ENCODE measurements at regions of chr17 and their contacts with region 1.

Region 1: GRCh38 chr17:8745586-8746500 is 1.2 kb upstream of the CCDC42 start:
- DNase-seq: peak; percentile 56 to 91 (median 82)
- ATAC-seq: peak; percentile 72
- H3K4me3 ChIP-seq: peak overlapping the region; percentile 74 to 77
- H3K4me3 Mint-ChIP-seq: peak overlapping the region; percentile 94
- H3K27ac ChIP-seq: peak overlapping the region; percentile 69 to 82
- H3K27ac Mint-ChIP-seq: peak overlapping the region; percentile 94
- H3K4me1 ChIP-seq: peaks cover 15% of the 10 kb centered on the region
- H3K4me1 Mint-ChIP-seq: peaks cover 25% of the 10 kb centered on the region
- H3K27me3 ChIP-seq: no peaks in the 10 kb centered on the region
- H3K27me3 Mint-ChIP-seq: no peaks in the 10 kb centered on the region
- CTCF ChIP-seq: peak; percentile 94

Region 2: DNA sequence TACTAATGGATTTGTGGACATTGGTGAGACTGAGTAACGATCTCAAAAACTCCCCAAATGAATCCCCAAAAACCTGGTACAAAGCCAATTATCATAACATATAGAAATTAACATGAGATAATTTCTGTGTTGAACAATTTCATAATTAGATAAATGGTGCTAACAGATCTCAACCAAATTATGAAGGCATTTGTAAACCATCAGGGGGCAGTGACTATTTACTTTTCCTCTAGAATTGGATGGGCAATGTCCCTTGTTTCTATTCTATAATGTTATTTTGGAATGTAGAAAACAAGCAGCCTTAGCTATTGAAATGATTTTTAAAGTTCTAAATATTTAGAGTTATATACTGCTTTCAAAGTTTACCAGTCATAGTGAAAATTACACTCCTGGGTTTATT is 173.1 kb before region 1 on chr17:
- CTCF ChIA-PET with region 1: interaction called, 3 read pairs
- POLR2A ChIA-PET with region 1: no interaction called
- intact Hi-C with region 1: loop called (anchors 1 to 2 kb)
- DNase-seq: peak in 2 of 9 experiments; percentile 3 to 20
- ATAC-seq: no peak
- H3K4me3 ChIP-seq: no peak overlapping the region
- H3K4me3 Mint-ChIP-seq: no peak overlapping the region
- H3K27ac ChIP-seq: no peak overlapping the region
- H3K27ac Mint-ChIP-seq: no peak overlapping the region
- H3K4me1 ChIP-seq: no peaks in the 10 kb centered on the region
- H3K4me1 Mint-ChIP-seq: no peaks in the 10 kb centered on the region
- H3K27me3 ChIP-seq: no peaks in the 10 kb centered on the region
- H3K27me3 Mint-ChIP-seq: peaks cover 3% of the 10 kb centered on the region
- CTCF ChIP-seq: no peak

Region 3: DNA sequence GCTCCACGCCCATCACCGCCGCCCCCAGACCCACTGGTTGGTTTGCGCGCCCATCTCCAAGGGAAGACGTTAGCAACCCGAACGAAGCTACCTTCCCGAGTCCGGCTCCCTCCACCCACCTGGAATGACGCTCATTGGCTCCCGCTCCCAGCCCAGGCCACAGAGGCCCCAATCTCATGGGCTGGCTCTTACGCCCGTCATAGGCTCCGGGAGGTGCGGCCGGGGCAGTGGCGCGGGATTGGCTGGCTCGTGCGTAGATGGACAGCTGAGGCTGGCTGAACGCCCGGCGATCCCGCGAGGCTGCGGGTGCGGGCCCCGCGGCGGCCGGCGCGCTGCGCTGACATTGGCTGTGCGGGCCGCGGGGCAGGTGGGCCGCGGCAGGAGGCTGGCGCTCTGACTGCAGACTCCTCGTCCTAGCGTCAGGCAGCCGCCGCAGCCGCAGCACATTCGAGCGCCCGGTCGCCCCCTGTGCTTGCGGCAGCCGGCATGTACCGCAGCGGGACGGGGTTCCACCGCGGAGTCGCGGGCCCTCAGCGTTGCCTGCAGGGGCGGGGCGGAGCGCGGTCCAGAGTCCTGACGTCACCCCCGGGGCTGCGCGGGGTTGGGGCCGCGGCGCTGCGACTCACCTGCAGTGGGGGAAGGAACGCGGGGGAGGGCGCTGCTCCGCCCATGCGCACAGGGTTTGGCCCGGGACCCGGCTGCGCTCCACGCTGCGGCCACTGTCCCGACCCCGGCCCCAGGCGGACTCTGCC is 114.9 kb before region 1 on chr17:
- CTCF ChIA-PET with region 1: no interaction called
- POLR2A ChIA-PET with region 1: no interaction called
- intact Hi-C with region 1: loop called (anchors 2 to 5 kb)
- DNase-seq: peak; percentile 50 to 93 (median 81)
- ATAC-seq: peak; percentile 87
- H3K4me3 ChIP-seq: peak overlapping the region; percentile 71 to 89
- H3K4me3 Mint-ChIP-seq: peak overlapping the region; percentile 98
- H3K27ac ChIP-seq: peak overlapping the region in 1 of 2 experiments; percentile 26
- H3K27ac Mint-ChIP-seq: peak overlapping the region; percentile 72
- H3K4me1 ChIP-seq: peaks cover 5% of the 10 kb centered on the region
- H3K4me1 Mint-ChIP-seq: peaks cover 15% of the 10 kb centered on the region
- H3K27me3 ChIP-seq: peaks cover 8 to 16% of the 10 kb centered on the region in 2 experiments
- H3K27me3 Mint-ChIP-seq: peaks cover 35% of the 10 kb centered on the region
- CTCF ChIP-seq: no peak

Region 4: DNA sequence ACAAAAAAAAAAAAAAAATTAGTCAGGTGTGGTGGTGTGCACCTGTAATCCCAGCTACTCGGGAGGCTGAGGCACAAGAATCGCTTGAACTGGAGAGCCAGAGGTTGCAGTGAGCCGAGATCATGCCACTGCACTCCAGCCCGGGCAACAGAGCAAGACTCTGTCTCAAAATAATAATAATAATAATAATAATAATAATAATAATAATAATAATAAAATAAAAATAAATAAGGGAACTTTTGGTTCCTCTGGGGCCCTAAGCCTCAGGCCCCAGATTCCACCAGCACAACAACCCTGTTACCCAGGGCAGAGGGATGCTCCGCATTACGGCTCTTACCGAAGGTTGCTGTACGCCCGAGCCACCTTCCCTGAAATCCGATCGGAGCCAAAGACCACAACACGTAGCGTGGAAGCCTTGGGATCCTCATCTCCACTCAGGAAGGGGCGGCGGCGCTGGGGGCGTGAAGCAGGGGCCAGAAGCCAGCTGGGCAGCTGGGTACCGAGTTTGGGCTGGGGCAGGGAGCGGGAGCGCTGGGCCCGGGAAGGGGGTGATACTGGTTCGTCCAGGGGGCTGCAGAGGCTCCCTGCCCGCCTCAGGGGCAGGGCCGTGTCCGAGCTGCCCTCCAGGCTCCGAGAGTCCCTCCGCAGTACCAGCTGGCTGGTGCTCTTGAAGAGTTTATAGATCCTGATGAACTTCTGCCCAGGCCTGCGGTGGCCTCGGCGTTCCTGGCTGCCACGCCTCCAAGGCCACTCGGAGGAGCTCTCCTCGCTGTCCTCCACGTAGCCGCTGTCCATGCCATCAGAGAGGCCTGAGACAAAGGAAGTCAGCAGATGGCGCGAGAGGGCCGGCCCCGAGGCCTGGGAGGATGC is 142.2 kb after region 1 on chr17:
- CTCF ChIA-PET with region 1: no interaction called
- POLR2A ChIA-PET with region 1: no interaction called
- intact Hi-C with region 1: loop called in 1 of 2 experiments (anchors 5 kb)
- DNase-seq: peak in 1 of 9 experiments; percentile 9
- ATAC-seq: no peak
- H3K4me3 ChIP-seq: no peak overlapping the region
- H3K4me3 Mint-ChIP-seq: no peak overlapping the region
- H3K27ac ChIP-seq: no peak overlapping the region
- H3K27ac Mint-ChIP-seq: no peak overlapping the region
- H3K4me1 ChIP-seq: no peaks in the 10 kb centered on the region
- H3K4me1 Mint-ChIP-seq: peaks cover 5% of the 10 kb centered on the region
- H3K27me3 ChIP-seq: no peaks in the 10 kb centered on the region
- H3K27me3 Mint-ChIP-seq: no peaks in the 10 kb centered on the region
- CTCF ChIP-seq: no peak

Region 5: GRCh38 chr17:9575381-9576101 is 829.7 kb after region 1 on chr17 and contains the start of gene STX8:
- CTCF ChIA-PET with region 1: no interaction called
- POLR2A ChIA-PET with region 1: no interaction called
- intact Hi-C with region 1: no loop called
- DNase-seq: peak; percentile 41 to 87 (median 76)
- ATAC-seq: peak; percentile 72
- H3K4me3 ChIP-seq: peak within 1 kb of the TSS; percentile 86 to 97
- H3K4me3 Mint-ChIP-seq: peak within 1 kb of the TSS; percentile 98
- H3K27ac ChIP-seq: peak within 1 kb of the TSS; percentile 34 to 60
- H3K27ac Mint-ChIP-seq: peak within 1 kb of the TSS; percentile 89
- H3K4me1 ChIP-seq: peaks cover 16% of the 10 kb centered on the region
- H3K4me1 Mint-ChIP-seq: peaks cover 42% of the 10 kb centered on the region
- H3K27me3 ChIP-seq: no peaks in the 10 kb centered on the region
- H3K27me3 Mint-ChIP-seq: no peaks in the 10 kb centered on the region
- CTCF ChIP-seq: no peak
- total RNA-seq, gene STX8: 38.6 to 43.7 TPM

Measured in CD8-positive, alpha-beta T cell (primary cell).